Naive thymus-derived CD4-positive, alpha-beta T cell (primary cell): ENCODE measurements at regions of chr6 and their contacts with region 1.

Region 1: GRCh38 chr6:11224252-11224965 is 8.1 kb downstream of the NEDD9 start:
- DNase-seq: peak in 6 of 9 donors; percentile 4 to 51 (median 34)
- ATAC-seq: peak; percentile 75
- H3K4me3 ChIP-seq: peak overlapping the region; percentile 20
- H3K4me3 Mint-ChIP-seq: peak overlapping the region; percentile 26 to 87 (median 62)
- H3K27ac ChIP-seq: no peak overlapping the region
- H3K27ac Mint-ChIP-seq: peak overlapping the region in 7 of 9 donors; percentile 15 to 93 (median 56)
- H3K4me1 ChIP-seq: peaks cover 8 to 37% of the 10 kb centered on the region in 2 donors
- H3K4me1 Mint-ChIP-seq: peaks cover 27 to 84% (median 38%) of the 10 kb centered on the region in 7 donors
- H3K27me3 ChIP-seq: no peaks in the 10 kb centered on the region
- H3K27me3 Mint-ChIP-seq: no peaks in the 10 kb centered on the region

Region 2: DNA sequence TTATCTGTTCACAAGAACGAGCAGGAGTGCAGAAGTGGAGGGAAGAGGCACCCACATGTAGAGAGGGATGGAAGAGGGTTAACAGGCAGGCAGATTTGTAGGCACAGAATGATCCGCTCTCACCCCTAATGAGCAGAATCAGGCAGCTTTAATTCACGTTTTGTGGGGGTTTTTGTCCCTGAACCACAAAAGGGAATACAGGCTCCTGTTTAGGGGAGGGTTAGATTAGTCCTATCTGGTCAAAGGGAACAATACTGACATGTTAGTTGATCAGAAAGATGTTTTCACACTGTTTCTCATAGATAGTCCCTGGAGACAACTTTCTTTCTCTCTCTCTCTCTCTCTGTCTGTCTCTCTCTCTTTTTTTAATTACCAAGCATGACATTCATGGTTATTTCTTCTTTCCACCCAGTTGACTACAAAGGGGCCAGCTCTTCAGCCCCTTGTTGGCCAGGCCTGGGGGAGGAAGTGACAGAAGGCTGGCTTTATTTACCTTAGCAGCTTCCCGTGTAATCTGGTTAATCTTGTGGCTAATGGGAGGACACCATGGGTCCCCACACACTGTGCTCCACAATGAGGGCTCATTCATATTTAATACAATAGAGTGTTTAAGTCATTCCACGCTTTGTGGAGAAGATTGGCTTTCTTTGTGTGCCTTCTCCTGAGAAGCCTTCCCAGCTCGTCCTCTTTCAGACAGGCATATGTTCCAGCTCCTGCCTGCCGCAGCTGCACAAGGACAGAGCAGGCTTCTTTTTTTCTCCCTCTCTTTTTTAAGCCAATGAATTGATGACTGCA is 1768.3 kb before region 1 on chr6:
- CTCF ChIA-PET with region 1: no interaction called
- POLR2A ChIA-PET with region 1: no interaction called
- intact Hi-C with region 1: no loop called
- DNase-seq: no peak
- ATAC-seq: no peak
- H3K4me3 ChIP-seq: no peak overlapping the region
- H3K4me3 Mint-ChIP-seq: no peak overlapping the region
- H3K27ac ChIP-seq: no peak overlapping the region
- H3K27ac Mint-ChIP-seq: no peak overlapping the region
- H3K4me1 ChIP-seq: no peaks in the 10 kb centered on the region
- H3K4me1 Mint-ChIP-seq: no peaks in the 10 kb centered on the region
- H3K27me3 ChIP-seq: no peaks in the 10 kb centered on the region
- H3K27me3 Mint-ChIP-seq: no peaks in the 10 kb centered on the region

Region 3: DNA sequence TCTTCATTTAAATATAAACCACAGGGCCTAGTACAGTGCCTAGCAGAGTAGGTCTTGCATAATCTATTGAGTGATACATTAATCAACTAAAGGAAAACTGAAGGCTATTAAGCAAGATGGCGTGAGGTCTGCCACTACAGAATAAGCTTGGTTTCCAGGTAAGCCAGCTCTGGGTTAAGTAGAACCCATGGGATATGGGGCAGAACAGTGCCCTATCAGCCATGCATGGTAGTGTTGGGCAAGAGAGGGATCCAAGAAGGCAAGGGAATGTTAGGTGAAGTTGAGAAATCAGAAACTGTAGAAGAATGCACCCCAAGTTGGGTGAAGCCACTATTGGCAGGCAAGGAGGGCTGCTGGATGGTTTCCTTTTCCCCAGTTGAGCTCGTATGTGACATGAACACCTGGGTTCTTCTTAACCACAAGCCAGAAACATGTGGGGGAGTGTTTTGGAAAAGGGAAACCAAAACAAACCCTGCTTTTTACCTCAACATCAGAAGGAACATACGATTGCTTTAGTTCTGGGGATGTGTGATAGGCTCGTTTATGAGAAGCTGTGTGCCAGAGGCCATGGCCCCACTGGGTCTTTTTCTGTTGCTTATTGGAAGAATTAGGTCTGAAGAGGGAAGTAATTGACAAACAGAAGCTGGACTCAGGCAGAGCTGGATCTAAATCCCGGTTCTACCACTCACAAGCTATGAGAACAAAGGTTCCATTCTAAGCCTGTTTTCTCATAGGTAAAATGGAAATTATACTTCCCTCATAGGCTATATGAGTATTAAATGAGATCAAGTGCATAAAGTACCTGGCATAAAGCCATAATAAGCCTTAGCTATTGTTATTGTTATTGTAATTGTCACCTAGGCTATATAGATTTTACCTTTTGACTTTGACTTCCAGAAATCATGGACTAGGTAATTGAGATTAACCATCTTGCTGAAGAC is 25.5 kb before region 1 on chr6:
- CTCF ChIA-PET with region 1: no interaction called
- POLR2A ChIA-PET with region 1: no interaction called
- intact Hi-C with region 1: loop called in 1 of 2 experiments (anchors 1 kb)
- DNase-seq: peak in 8 of 9 donors; percentile 23 to 73 (median 58)
- ATAC-seq: peak; percentile 77
- H3K4me3 ChIP-seq: no peak overlapping the region
- H3K4me3 Mint-ChIP-seq: peak overlapping the region; percentile 19 to 61 (median 52)
- H3K27ac ChIP-seq: peak overlapping the region; percentile 6
- H3K27ac Mint-ChIP-seq: peak overlapping the region; percentile 57 to 90 (median 73)
- H3K4me1 ChIP-seq: peaks cover 11 to 44% of the 10 kb centered on the region in 2 donors
- H3K4me1 Mint-ChIP-seq: peaks cover 36 to 81% (median 62%) of the 10 kb centered on the region in 7 donors
- H3K27me3 ChIP-seq: no peaks in the 10 kb centered on the region
- H3K27me3 Mint-ChIP-seq: no peaks in the 10 kb centered on the region

Region 4: DNA sequence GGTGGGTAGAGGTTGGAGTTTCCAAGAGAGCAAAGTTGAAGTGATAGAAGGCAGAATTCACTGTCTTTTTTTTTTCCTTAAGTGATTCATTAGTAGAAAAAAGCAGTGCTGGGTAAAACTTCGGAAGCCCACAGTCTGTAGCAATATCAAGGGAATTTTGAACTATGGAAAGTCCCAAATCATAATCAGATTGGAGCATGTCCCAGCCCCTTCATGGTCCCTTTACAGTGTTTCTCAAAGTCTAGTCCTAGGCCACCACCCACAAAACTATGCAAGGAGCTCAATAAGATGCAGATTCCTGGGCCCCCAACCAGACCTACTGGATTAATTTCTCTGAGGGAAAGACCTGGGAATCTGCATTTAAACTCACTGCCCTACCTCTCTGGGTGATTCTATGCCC is 14.5 kb before region 1 on chr6:
- CTCF ChIA-PET with region 1: no interaction called
- POLR2A ChIA-PET with region 1: no interaction called
- intact Hi-C with region 1: loop called in 1 of 2 experiments (anchors 1 kb)
- DNase-seq: no peak
- ATAC-seq: no peak
- H3K4me3 ChIP-seq: no peak overlapping the region
- H3K4me3 Mint-ChIP-seq: no peak overlapping the region
- H3K27ac ChIP-seq: no peak overlapping the region
- H3K27ac Mint-ChIP-seq: peak overlapping the region in 1 of 9 donors; percentile 64
- H3K4me1 ChIP-seq: peaks cover 0 to 17% of the 10 kb centered on the region in 2 donors
- H3K4me1 Mint-ChIP-seq: peaks cover 12 to 68% (median 29%) of the 10 kb centered on the region in 7 donors
- H3K27me3 ChIP-seq: no peaks in the 10 kb centered on the region
- H3K27me3 Mint-ChIP-seq: no peaks in the 10 kb centered on the region